ENCODE measurements at regions of chr5 and their contacts with region 1.

Region 1: GRCh38 chr5:103475629-103476240 is 86.9 kb downstream of the NUDT12 start:
- DNase-seq: no peak

Region 2: DNA sequence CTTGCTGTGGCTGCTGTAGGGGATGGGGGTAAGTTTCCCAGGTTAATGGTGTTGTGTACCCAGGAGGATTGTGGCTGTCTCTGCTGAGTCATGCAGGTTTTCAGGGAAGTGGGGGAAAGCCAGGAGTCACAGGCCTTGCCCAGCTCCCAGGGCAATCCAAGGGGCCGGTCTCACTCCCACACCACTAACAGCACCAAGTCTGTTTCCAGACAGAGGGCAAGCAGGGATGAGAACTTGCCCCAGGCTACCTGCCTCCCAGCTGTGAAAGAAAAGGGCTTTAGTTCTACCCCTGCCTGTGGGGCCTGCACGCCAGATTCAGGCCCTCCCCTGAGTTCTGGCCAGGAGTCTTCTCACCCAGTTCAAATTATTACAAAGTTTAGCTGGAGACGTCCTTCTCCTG is 1992.8 kb before region 1 on chr5:
- intact Hi-C with region 1: no loop called
- DNase-seq: peak; percentile 12

Region 3: DNA sequence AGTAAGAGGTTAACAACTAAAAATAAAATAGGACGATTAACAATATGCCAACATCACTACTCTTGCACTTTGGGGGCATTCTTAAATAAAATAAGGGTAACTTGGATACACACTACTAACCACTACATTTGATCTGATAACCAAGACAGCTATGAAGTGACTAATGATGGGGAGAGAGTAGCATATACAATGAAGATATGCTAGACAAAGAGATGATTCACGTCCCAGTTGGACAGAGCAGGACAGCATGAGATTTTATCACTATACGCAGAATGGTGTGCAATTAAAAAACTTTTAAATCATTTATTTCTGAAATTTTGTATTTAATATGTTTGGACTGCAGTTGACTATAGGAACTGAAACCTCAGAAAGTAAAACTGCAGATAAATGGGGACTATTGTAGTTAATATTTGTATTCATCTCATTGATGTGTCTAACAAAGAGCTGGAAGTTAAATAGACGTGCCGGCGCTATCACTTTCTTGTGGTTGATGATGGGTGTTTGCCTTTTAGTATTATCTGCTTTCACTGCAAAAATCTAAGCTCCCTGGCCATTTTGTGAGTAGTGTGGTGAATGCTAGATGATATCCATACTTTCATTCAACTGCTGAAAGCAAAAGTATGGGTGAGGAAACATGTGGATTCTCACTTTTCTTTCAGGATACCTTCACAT is 374.5 kb before region 1 on chr5:
- intact Hi-C with region 1: loop called in 1 of 2 experiments (anchors 10 kb)
- DNase-seq: no peak

Region 4: DNA sequence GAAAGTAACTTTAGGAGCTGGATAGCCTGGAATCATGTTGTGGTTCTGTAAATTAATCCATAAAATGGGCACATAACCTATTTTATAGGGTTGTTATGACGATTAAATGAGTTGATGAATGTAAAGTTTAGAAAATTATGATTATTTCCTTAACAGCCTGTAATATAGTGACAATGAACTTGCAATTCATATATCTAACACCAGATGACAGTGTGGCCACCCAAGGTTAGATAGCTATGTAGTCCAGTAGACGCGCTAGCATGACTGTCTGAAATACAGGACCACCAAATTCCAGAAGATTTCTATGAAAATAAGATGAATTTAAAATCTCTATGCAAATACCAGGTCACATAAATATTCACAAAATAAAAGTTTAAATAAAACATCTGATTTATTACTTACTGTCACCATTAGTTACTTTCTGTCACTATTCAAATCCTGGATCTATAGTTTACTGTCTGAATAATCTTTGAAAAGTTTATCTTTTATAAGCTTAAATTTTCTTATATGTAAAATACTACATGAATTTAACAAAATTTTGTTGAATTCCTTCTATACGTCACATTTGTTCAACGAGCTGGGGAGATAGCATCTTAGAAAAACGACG is 243.2 kb before region 1 on chr5:
- intact Hi-C with region 1: loop called (anchors 10 kb)
- DNase-seq: no peak

Region 5: DNA sequence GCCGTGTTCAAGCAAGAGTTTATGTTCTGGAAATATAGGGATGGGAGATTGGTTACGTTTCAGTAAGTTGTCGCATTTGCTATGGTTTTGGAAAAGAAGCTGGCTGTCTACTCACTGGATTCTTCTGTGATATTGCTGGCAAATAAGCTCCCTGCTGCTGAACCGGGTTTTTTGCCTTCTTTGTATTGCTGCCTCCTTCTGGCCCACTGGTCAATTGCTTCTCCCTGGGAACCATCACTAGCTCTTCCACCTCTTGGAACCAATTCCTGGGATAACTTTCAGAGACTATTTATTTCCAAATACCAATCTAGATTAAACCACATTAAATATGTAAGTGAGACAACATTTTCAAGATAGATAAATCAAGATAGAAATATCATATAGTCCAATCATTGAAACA is 43.8 kb after region 1 on chr5:
- intact Hi-C with region 1: no loop called
- DNase-seq: no peak

Region 6: GRCh38 chr5:103657301-103657700 is 181.6 kb after region 1 on chr5:
- intact Hi-C with region 1: no loop called
- DNase-seq: no peak

Region 7: GRCh38 chr5:104913841-104914281 is 1438.1 kb after region 1 on chr5:
- intact Hi-C with region 1: no loop called
- DNase-seq: no peak